PC-3 (cell line): ENCODE measurements at regions of chr1 and their contacts with region 1.

Region 1: GRCh38 chr1:7902478-7903085 is 38.1 kb downstream of the TNFRSF9 start:
- DNase-seq: peak; percentile 81
- ATAC-seq: peak; percentile 85
- H3K4me3 ChIP-seq: peak overlapping the region; percentile 9; the same call in 1 of the 2 replicates
- H3K27ac ChIP-seq: no peak overlapping the region
- H3K4me1 ChIP-seq: peaks cover 18% of the 10 kb centered on the region
- H3K27me3 ChIP-seq: no peaks in the 10 kb centered on the region
- CTCF ChIP-seq: peak; percentile 73

Region 2: GRCh38 chr1:7808253-7808844 is 94.2 kb before region 1 on chr1:
- CTCF ChIA-PET with region 1: interaction called, 6 read pairs
- POLR2A ChIA-PET with region 1: no interaction called
- intact Hi-C with region 1: loop called (anchors 1 kb)
- DNase-seq: peak; percentile 52
- ATAC-seq: peak; percentile 51; the same call in 1 of the 2 replicates
- H3K4me3 ChIP-seq: no peak overlapping the region
- H3K27ac ChIP-seq: no peak overlapping the region
- H3K4me1 ChIP-seq: peaks cover 11% of the 10 kb centered on the region
- H3K27me3 ChIP-seq: no peaks in the 10 kb centered on the region
- CTCF ChIP-seq: peak; percentile 84

Region 3: DNA sequence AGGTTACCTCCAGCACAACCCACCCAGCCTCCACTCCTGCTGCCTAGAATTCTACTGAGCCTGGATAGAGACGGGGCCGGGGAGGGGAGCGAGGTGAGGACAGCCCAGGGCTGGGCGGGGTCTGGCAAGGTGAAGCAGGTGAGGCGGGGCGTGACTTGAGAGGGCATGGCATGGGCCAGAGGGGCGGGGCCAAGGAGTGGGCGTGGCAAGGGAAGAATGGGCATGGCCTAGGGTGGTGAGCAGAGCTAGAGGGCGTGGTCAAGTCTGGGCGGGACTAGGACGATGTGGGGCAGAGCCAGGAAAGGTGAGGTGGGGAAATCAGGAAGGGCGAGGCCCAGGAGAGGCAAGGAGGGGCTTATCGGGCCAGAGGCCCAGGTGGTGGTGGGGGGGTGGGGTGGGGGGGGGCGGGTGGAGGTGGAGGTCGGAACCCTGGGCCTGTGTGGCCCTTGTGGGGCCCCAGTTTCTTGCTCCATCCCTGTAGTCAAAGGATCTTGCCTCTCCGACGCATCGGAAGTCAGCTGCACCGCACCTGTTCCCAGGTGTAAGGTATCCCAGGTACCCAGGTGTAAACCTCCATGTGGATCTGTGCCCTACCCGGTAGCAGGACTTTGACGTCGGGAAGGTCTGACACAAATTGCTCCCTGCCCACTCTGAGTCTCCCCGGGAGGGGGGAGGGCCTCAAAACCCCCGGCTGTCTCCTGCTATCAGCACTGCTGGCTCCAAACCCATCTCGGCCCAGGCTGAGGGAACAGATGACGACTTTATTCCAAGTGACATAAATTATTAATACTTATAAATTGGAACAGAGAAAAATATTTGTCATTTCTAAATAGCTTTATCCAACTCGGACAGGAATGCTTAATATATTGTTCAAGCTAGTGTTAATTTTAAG is 16.8 kb before region 1 on chr1:
- CTCF ChIA-PET with region 1: no interaction called
- POLR2A ChIA-PET with region 1: no interaction called
- intact Hi-C with region 1: no loop called
- DNase-seq: peak; percentile 34
- ATAC-seq: peak; percentile 38
- H3K4me3 ChIP-seq: peak overlapping the region; percentile 29; the same call in 1 of the 2 replicates
- H3K27ac ChIP-seq: no peak overlapping the region
- H3K4me1 ChIP-seq: peaks cover 7% of the 10 kb centered on the region
- H3K27me3 ChIP-seq: no peaks in the 10 kb centered on the region
- CTCF ChIP-seq: no peak